Heart right ventricle (tissue), 16 donors: ENCODE measurements at regions of chr7 and their contacts with region 1.

Region 1: DNA sequence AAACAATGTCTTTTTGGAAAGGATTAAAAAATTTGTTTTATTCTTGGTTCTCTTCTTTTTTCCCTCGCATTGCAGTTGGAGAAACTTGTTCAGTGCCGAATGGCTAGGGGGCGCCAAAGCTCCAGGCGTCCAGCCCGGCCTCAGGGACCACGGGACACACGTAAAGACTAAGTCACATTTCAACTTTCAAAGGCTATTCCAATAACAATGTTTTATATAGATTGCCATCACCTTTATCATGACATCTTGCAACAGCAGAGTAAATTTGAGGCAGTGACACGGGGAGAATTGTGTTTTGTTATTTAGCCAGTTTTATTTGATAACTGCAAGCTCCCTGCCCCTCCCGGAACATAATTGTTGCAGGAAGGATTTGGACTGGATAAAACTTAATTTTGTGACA is 2.2 kb upstream of the IGFBP3 start:
- DNase-seq: peak; percentile 75 to 79
- ATAC-seq: peak in 7 of 8 donors; percentile 47 to 74 (median 66)
- H3K4me3 ChIP-seq: peak overlapping the region in 9 of 10 donors; percentile 34 to 77 (median 63)
- H3K27ac ChIP-seq: peak overlapping the region in 5 of 10 donors; percentile 7 to 73 (median 70)
- H3K4me1 ChIP-seq: peaks cover 5 to 53% (median 45%) of the 10 kb centered on the region in 9 donors
- H3K27me3 ChIP-seq: peaks cover 0 to 57% (median 0%) of the 10 kb centered on the region in 7 donors
- CTCF ChIP-seq: peak; percentile 88 to 98 (median 93)

Region 2: DNA sequence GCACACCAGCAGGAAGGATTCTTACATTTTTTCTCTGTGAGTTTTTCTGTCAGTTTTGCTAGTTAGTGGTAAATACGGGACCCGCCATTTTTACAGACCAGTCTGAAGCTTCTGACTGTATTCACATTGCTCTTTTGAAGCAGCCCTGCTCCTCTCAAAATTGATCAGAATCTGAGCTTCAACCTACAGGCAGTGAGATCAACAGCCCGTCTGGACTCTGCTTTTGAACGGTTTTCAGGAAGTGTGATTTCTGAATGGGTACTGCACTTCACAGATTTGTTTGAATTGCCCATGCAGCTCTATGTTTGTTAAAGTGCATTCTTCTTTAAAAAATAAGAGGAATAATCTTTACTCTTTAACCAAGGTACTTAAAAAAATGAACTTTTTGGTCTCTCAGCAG is 1046.9 kb before region 1 on chr7:
- intact Hi-C with region 1: loop called in 1 of 10 experiments (anchors 5 kb)
- DNase-seq: no peak
- ATAC-seq: no peak
- H3K4me3 ChIP-seq: no peak overlapping the region
- H3K27ac ChIP-seq: no peak overlapping the region
- H3K4me1 ChIP-seq: peaks cover 0 to 49% (median 35%) of the 10 kb centered on the region in 9 donors
- H3K27me3 ChIP-seq: no peaks in the 10 kb centered on the region
- CTCF ChIP-seq: no peak

Region 3: DNA sequence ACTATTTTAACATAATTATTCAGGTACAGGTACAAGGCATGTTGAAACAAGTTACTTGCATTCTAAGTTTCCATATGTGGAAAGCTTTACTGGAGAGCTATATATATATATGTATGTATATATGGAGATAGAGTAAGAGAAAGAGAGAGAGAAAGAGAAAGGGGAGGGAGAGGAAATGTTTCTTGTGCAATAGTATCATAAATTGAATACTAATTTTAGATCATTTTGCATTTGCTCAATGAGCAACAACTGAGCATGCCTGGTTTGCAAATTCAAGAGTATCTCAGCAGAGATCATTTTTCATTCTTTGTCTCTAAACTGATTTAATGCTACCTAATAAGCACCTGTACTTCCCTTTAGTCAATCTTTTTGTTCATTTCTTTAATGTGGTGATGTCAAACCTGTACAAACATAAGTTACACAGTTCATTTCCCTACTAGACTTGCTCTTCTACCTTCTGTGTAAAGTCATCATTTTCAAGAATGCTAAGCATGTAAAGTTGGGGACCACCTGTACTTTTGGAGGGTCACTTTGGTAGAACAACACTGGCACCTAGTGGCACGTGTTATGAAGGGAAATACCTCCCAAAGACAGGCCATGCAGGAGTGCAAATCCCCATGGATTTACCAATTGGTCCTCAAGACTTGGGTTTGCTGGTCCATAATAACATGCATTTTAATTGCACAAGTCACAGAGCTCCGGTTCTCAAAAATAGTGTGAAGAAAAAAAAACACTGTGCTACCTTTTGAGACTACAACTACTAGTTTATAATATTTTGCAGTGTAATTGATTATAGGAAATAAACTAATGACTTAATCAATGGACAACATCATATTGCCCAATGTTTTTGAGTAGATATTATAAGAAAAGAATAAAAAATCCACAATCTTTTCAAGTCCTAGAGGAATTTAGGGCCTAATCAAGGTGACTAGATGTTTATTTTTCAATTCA is 429.0 kb after region 1 on chr7:
- intact Hi-C with region 1: loop called in 9 of 10 experiments (anchors 1 to 5 kb)
- DNase-seq: peak in 1 of 2 donors; percentile 53
- ATAC-seq: peak in 6 of 8 donors; percentile 55 to 71 (median 64)
- H3K4me3 ChIP-seq: no peak overlapping the region
- H3K27ac ChIP-seq: no peak overlapping the region
- H3K4me1 ChIP-seq: no peaks in the 10 kb centered on the region
- H3K27me3 ChIP-seq: peaks cover 0 to 6% (median 0%) of the 10 kb centered on the region in 7 donors
- CTCF ChIP-seq: peak; percentile 46 to 81 (median 66)

Region 4: DNA sequence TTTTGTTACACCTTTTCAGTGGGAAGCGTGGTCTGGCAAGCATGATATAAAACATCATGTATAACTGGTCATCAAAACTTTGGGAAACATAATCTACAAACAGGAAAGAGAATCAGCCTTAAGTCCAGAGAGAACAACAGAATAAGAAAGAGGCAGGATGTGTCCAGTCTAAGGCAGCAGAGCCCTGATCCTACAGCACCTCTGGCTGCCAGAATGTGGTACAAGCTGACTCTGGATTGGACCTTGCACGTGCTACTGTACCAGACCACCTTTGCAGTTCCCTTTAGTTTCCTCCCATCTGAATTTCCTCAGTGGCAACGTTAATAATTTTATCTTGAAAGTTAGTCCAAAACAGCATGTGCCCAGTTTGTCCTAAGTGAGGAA is 822.4 kb after region 1 on chr7:
- intact Hi-C with region 1: loop called in 1 of 10 experiments (anchors 10 kb)
- DNase-seq: no peak
- ATAC-seq: peak in 4 of 8 donors; percentile 55 to 71 (median 64)
- H3K4me3 ChIP-seq: no peak overlapping the region
- H3K27ac ChIP-seq: no peak overlapping the region
- H3K4me1 ChIP-seq: peaks cover 0 to 13% (median 3%) of the 10 kb centered on the region in 9 donors
- H3K27me3 ChIP-seq: no peaks in the 10 kb centered on the region
- CTCF ChIP-seq: peak in 4 of 9 donors; percentile 21 to 41 (median 24)

Region 5: GRCh38 chr7:46932676-46933424 is 1009.6 kb after region 1 on chr7:
- intact Hi-C with region 1: loop called in 2 of 10 experiments (anchors 10 kb)
- DNase-seq: peak in 1 of 2 donors; percentile 24
- ATAC-seq: peak; percentile 51 to 90 (median 74)
- H3K4me3 ChIP-seq: no peak overlapping the region
- H3K27ac ChIP-seq: peak overlapping the region in 8 of 10 donors; percentile 5 to 70 (median 58)
- H3K4me1 ChIP-seq: peaks cover 0 to 48% (median 23%) of the 10 kb centered on the region in 9 donors
- H3K27me3 ChIP-seq: no peaks in the 10 kb centered on the region
- CTCF ChIP-seq: peak in 6 of 9 donors; percentile 12 to 51 (median 34)

Region 6: GRCh38 chr7:47232751-47233412 is 1309.6 kb after region 1 on chr7:
- intact Hi-C with region 1: loop called in 2 of 10 experiments (anchors 5 kb)
- DNase-seq: no peak
- ATAC-seq: peak in 3 of 8 donors; percentile 32 to 46 (median 39)
- H3K4me3 ChIP-seq: no peak overlapping the region
- H3K27ac ChIP-seq: no peak overlapping the region
- H3K4me1 ChIP-seq: peaks cover 0 to 9% (median 0%) of the 10 kb centered on the region in 9 donors
- H3K27me3 ChIP-seq: no peaks in the 10 kb centered on the region
- CTCF ChIP-seq: peak in 8 of 9 donors; percentile 11 to 55 (median 42)